Esophagus squamous epithelium (tissue), 5 donors: ENCODE measurements at regions of chr11 and their contacts with region 1.

Region 1: DNA sequence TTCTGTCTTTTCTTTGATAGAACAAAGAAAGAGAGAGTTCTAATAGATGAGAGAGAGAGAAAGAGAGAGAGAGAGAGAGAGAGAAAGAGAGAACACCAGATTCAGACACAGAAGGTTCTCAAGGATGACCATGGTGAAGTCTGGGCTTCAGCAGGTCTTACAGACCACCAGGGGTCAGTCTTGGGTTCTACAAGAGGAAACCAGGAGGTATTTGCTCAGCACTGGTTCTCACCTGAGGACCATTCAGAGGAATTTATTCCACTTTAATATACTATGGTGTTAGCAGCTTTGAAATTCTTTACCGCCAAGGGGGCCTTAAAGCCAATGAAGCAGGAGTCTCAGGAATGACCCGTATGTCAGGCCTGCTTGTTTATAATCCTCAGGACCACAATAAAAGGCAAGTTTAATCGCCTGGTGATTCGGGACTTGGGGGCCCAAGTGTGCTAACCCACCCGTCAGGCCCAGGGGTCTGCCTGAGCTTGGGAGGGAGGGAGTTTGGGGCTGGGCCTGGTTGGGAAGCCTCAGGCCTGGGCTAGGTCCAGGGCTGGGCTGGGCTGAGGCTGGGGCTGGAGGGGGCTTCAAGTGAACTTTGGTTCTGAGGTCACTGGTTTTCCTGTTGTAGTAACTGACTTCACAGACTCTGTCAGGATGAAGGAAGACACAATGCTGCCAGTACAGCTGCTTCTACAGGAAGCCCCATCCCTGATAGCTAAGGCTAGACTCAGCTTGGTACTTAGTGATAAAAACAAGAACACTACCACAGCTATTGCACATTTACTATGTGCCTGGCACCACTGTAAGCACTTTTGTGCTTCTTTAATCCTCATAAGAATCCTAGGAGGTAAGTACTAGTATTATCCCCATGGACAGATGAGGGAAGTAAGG is 179.2 kb upstream of the ZBED5 start:
- DNase-seq: no peak
- H3K4me3 ChIP-seq: no peak overlapping the region
- H3K27ac ChIP-seq: peak overlapping the region in 3 of 4 donors; percentile 56 to 58 (median 57)
- H3K4me1 ChIP-seq: peaks cover 0 to 27% (median 11%) of the 10 kb centered on the region in 3 donors
- H3K27me3 ChIP-seq: no peaks in the 10 kb centered on the region
- CTCF ChIP-seq: peak; percentile 52 to 81 (median 68)
- POLR2A ChIP-seq: no peak

Region 2: DNA sequence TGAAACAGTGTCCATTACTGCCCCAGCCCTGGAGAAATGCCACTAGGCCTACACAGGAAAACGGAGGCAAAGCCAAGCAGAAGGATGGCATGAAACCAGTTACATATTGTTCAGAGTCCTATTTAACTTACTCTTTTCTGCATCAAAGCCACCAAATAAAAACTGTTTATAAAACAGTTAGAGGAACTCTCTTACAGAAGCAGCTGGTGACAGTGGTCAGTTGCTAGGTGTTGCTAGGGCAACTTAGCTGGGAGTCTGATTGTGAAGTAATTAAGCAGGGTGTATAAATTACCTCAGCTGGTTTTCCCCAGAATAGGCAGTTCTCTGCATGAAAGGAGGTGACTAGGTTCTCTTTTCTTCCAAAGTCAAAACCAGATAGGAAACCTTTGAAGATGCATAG is 63.7 kb before region 1 on chr11:
- intact Hi-C with region 1: no loop called
- DNase-seq: no peak
- H3K4me3 ChIP-seq: no peak overlapping the region
- H3K27ac ChIP-seq: no peak overlapping the region
- H3K4me1 ChIP-seq: no peaks in the 10 kb centered on the region
- H3K27me3 ChIP-seq: no peaks in the 10 kb centered on the region
- CTCF ChIP-seq: no peak
- POLR2A ChIP-seq: no peak

Region 3: DNA sequence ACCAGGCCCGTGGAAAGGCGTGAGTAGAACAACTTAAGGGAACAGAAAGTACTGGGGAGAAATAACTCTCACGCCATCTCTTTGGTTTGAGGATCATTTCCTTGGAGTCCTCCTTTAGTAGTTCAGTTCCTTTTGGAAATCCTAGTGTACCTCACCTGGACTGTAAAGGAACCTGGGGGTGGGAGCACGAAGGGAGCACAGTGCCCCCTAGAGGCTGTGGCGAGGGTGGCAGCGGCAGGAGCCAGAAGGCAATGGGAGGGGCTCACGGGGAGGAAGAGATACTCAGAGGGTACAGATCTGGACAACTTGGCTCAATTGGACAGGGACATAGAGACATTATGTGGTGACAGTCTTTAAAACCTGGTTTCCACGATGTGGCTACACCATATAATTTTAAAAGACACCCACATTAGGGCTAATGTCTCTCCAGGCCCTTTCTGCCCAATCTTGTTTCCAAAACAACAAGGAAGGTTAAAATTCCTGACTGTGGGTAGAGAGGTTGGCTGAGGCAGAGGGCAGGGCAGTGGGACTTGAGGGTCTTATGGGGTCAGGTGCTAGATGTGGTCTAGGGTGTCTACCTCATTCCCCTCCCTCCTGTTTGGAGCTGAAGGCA is 229.0 kb after region 1 on chr11:
- intact Hi-C with region 1: loop called (anchors 5 kb)
- DNase-seq: no peak
- H3K4me3 ChIP-seq: no peak overlapping the region
- H3K27ac ChIP-seq: no peak overlapping the region
- H3K4me1 ChIP-seq: peaks cover 0 to 16% (median 4%) of the 10 kb centered on the region in 3 donors
- H3K27me3 ChIP-seq: no peaks in the 10 kb centered on the region
- CTCF ChIP-seq: peak; percentile 39 to 92 (median 84)
- POLR2A ChIP-seq: no peak